CD8-positive, alpha-beta memory T cell (primary cell): ENCODE measurements at regions of chr22 and their contacts with region 1.

Region 1: GRCh38 chr22:38272373-38273134 is at the start of gene TMEM184B:
- DNase-seq: peak; percentile 79 to 87 (median 84)
- H3K4me3 ChIP-seq: peak within 1 kb of the TSS; percentile 67
- H3K4me3 Mint-ChIP-seq: peak within 1 kb of the TSS; percentile 90 to 98 (median 93)
- H3K27ac ChIP-seq: peak within 1 kb of the TSS; percentile 75
- H3K27ac Mint-ChIP-seq: peak within 1 kb of the TSS; percentile 90 to 99 (median 97)
- H3K4me1 ChIP-seq: peaks cover 31% of the 10 kb centered on the region
- H3K4me1 Mint-ChIP-seq: peaks cover 46 to 58% (median 49%) of the 10 kb centered on the region in 3 donors
- H3K27me3 ChIP-seq: no peaks in the 10 kb centered on the region
- H3K27me3 Mint-ChIP-seq: peaks cover 0 to 3% of the 10 kb centered on the region in 2 donors
- total RNA-seq, gene TMEM184B: 29.0 to 31.7 TPM

Region 2: DNA sequence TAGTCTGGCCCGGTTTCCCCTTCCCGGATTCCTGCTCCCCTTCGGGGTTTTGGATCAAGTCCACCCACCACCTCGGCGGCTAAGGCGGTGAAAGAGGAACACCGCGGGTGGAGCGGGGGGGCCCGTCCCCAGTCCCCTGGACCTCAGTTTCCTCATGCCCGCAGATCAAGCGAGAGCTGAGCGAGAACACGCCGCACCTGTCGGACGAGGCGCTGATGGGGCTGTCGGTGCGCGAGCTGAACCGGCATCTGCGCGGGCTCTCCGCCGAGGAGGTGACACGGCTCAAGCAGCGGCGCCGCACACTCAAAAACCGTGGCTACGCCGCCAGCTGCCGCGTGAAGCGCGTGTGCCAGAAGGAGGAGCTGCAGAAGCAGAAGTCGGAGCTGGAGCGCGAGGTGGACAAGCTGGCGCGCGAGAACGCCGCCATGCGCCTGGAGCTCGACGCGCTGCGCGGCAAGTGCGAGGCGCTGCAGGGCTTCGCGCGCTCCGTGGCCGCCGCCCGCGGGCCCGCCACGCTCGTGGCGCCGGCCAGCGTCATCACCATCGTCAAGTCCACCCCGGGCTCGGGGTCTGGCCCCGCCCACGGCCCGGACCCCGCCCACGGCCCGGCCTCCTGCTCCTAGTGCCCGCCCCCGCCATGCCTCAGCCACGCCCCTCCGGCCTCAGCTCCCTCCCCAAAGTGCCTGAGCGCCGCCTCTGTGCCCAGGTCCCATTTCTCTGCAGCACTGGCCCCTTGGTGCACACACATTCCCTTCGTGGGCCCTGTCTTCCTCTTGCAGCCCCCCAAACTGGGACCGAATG is 58.1 kb before region 1 on chr22:
- CTCF ChIA-PET with region 1: no interaction called
- POLR2A ChIA-PET with region 1: interaction called, 10 read pairs
- DNase-seq: peak; percentile 67 to 83 (median 70)
- H3K4me3 ChIP-seq: peak overlapping the region; percentile 26
- H3K4me3 Mint-ChIP-seq: peak overlapping the region; percentile 23 to 71 (median 55)
- H3K27ac ChIP-seq: no peak overlapping the region
- H3K27ac Mint-ChIP-seq: peak overlapping the region in 5 of 8 donors; percentile 57 to 84 (median 76)
- H3K4me1 ChIP-seq: peaks cover 14% of the 10 kb centered on the region
- H3K4me1 Mint-ChIP-seq: peaks cover 25 to 45% (median 29%) of the 10 kb centered on the region in 3 donors
- H3K27me3 ChIP-seq: no peaks in the 10 kb centered on the region
- H3K27me3 Mint-ChIP-seq: peaks cover 0 to 2% of the 10 kb centered on the region in 2 donors